Left cardiac atrium (tissue), 4 donors: ENCODE measurements at regions of chr6 and their contacts with region 1.

Region 1: DNA sequence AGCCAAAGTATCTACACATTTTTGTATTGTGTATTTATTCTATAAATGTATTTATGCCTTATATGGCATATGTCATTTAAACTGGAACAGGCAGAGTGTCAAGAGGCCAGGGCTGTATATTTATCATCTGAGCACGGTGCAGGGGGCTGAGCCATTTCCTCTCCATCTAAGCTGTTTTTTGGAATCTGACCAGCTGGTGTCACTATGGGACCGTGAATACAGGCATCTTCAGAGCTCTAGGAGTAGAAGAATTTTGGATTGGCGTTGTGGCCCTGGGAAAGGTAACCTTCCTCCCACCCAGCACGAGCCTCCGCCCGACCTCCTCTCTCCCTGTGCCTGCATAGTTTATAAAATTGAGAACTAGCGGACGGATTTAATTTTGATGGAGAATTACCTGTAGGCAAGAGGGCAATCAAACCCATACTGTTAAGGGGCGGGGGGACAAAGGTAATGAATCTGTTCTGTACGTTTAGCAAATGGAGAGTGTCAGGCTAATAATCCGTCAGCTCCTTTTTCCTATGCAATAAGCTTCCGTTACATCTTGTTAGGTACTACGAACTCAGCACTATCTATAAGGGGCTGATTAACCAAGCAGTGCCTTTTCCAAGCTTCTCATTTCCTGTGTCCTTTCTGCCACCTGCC is 29.0 kb upstream of the EEF1E1 start:
- DNase-seq: peak; percentile 29
- ATAC-seq: peak; percentile 59 to 70

Region 2: GRCh38 chr6:8219352-8219943 is 88.1 kb after region 1 on chr6:
- intact Hi-C with region 1: loop called in 1 of 2 experiments (anchors 2 kb)
- DNase-seq: no peak
- ATAC-seq: peak in 1 of 2 donors; percentile 37